A549 (cell line): ENCODE measurements at regions of chrX and their contacts with region 1.

Region 1: DNA sequence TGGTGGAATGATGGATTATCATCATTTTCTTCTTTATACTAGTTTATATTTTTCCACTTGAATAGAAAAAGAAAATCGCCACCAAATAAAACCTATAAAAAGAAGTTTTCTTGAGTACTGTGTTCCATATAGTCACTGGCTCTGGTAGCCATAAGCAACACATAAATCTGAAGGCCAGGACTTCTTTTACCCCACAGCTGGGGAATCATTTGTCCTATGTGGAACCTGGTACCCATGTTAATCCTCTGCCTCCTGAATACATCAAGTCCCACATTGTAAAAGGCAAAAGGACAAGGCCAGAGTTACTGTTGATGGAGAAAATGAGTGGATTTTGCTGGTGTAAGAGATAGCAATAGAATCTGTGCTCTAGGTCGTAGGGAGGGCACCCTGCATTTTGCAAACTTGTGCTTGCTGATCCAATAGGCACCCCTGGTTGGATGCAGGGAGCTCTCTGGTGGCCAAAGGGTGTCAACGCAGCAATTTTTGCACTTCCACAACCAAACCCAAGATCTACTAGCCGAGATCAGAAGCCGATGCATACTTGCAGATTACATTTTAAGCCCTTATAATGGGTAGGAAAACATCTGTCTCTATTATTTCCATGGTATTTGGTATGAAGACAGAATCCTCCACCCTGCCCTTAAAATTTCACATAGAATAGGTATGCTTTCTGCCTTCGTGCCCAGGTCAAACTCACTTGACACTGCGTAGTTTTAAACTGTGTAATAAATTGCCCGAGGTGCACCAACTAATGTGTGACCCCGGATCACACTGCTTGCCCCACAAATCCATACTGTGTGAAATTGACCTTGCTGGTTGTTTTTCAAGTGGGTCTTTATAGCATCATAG is 146.2 kb upstream of the SCML1 start:
- DNase-seq: peak; percentile 28 to 73
- ATAC-seq: peak; percentile 92 to 97
- H3K4me3 ChIP-seq: no peak overlapping the region
- H3K27ac ChIP-seq: peak overlapping the region; percentile 60 to 78
- H3K4me1 ChIP-seq: peaks cover 55% of the 10 kb centered on the region
- CTCF ChIP-seq: peak; percentile 68
- EP300 ChIP-seq: no peak
- POLR2A ChIP-seq: no peak
- RAD21 ChIP-seq: peak; percentile 88 to 93

Region 2: DNA sequence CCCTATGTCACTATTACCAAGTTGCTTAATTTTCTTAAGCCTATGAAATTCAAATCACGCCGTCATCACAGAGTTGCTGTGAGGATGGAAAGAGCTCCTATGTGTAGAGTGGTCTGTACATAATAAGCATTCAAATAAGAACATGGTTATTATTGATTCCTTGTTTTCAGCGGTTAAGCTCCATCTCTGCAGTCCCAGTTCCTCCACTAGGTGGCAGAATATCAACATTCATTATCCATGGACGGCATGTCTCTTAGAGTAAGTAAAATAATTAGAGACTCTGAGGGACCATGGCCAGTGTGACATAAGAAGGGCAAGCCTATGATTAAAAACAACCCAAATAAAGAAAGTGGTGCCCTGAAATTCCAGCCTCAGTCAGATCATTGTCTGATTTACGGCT is 348.6 kb before region 1 on chrX:
- CTCF ChIA-PET with region 1: interaction called, 14 read pairs
- POLR2A ChIA-PET with region 1: no interaction called
- DNase-seq: peak in 1 of 2 experiments; percentile 55
- ATAC-seq: peak; percentile 78 to 82; a peak in 5 of 6 replicates
- H3K4me3 ChIP-seq: no peak overlapping the region
- H3K27ac ChIP-seq: no peak overlapping the region
- H3K4me1 ChIP-seq: no peaks in the 10 kb centered on the region
- CTCF ChIP-seq: peak; percentile 72
- EP300 ChIP-seq: no peak
- POLR2A ChIP-seq: no peak
- RAD21 ChIP-seq: peak; percentile 79 to 82

Region 3: GRCh38 chrX:17377091-17377645 is 213.9 kb before region 1 on chrX:
- CTCF ChIA-PET with region 1: interaction called, 13 read pairs
- POLR2A ChIA-PET with region 1: interaction called, 9 read pairs
- DNase-seq: peak; percentile 64 to 86
- ATAC-seq: peak; percentile 46 to 76
- H3K4me3 ChIP-seq: peak overlapping the region; percentile 93
- H3K27ac ChIP-seq: peak overlapping the region; percentile 88 to 98
- H3K4me1 ChIP-seq: peaks cover 22% of the 10 kb centered on the region
- CTCF ChIP-seq: no peak
- EP300 ChIP-seq: no peak
- POLR2A ChIP-seq: no peak
- RAD21 ChIP-seq: peak in 1 of 2 experiments; percentile 2; a peak in 1 of 5 replicates

Region 4: GRCh38 chrX:17474892-17475291 is 116.2 kb before region 1 on chrX:
- CTCF ChIA-PET with region 1: no interaction called
- POLR2A ChIA-PET with region 1: no interaction called
- DNase-seq: peak in 1 of 2 experiments; percentile 7
- ATAC-seq: peak; percentile 30 to 67; a peak in 3 of 6 replicates
- H3K4me3 ChIP-seq: no peak overlapping the region
- H3K27ac ChIP-seq: peak overlapping the region in 1 of 2 experiments; percentile 65; a peak in 3 of 6 replicates
- H3K4me1 ChIP-seq: peaks cover 34% of the 10 kb centered on the region
- CTCF ChIP-seq: no peak
- EP300 ChIP-seq: no peak
- POLR2A ChIP-seq: no peak
- RAD21 ChIP-seq: no peak

Region 5: GRCh38 chrX:17535229-17535628 is 55.9 kb before region 1 on chrX:
- CTCF ChIA-PET with region 1: interaction called, 13 read pairs
- POLR2A ChIA-PET with region 1: no interaction called
- DNase-seq: peak in 1 of 2 experiments; percentile 46
- ATAC-seq: peak; percentile 39 to 78; a peak in 3 of 6 replicates
- H3K4me3 ChIP-seq: no peak overlapping the region
- H3K27ac ChIP-seq: no peak overlapping the region
- H3K4me1 ChIP-seq: no peaks in the 10 kb centered on the region
- CTCF ChIP-seq: peak; percentile 5; the same call in 1 of the 3 replicates
- EP300 ChIP-seq: no peak
- POLR2A ChIP-seq: no peak
- RAD21 ChIP-seq: peak; percentile 47 to 65; a peak in 4 of 5 replicates

Region 6: DNA sequence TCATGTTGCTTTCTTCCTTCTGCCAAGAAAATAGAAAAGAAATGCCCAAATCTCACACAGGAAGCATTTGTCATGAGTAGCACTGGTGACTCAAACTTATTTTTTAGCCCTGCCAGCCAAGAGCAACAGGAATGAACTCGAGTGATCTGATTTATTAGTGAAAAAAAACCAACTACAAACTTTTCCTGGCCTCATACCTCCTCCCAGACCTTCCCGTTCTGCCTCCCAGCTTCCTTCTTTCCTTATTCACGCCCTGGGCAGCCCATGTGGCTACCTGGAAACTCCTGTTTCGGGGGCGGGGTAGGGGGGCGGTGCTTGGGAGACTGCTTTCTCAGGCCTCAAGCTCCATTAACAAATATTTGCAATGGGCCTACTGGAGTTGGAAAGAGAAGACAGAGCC is 37.6 kb before region 1 on chrX:
- CTCF ChIA-PET with region 1: interaction called, 10 read pairs
- POLR2A ChIA-PET with region 1: no interaction called
- DNase-seq: peak in 1 of 2 experiments; percentile 14
- ATAC-seq: no peak; a peak in 1 of 6 replicates
- H3K4me3 ChIP-seq: no peak overlapping the region
- H3K27ac ChIP-seq: peak overlapping the region; percentile 50 to 78; a peak in 5 of 6 replicates
- H3K4me1 ChIP-seq: peaks cover 28% of the 10 kb centered on the region
- CTCF ChIP-seq: no peak
- EP300 ChIP-seq: no peak
- POLR2A ChIP-seq: no peak
- RAD21 ChIP-seq: no peak

Region 7: DNA sequence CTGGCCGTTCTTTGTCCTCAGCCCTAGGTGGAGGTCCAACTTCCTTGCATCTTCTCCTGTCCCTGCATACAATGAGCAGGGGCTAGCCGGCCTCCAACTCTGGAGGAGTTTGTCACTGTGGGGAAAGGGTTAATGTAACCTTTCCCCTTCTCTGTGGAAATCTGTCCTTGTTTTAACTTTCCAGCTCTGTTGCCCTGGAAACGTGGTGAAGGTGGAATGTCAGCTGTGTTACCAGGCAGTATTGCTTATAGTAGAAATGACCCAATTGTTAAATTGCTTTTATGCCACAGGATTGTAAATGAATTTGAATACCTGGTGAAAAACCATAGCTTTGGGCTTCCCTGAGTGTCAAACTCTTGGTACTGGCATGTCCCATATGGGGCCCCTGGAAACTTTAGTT is 14.6 kb after region 1 on chrX:
- CTCF ChIA-PET with region 1: interaction called, 16 read pairs
- POLR2A ChIA-PET with region 1: no interaction called
- DNase-seq: no peak
- ATAC-seq: no peak
- H3K4me3 ChIP-seq: no peak overlapping the region
- H3K27ac ChIP-seq: no peak overlapping the region
- H3K4me1 ChIP-seq: peaks cover 16% of the 10 kb centered on the region
- CTCF ChIP-seq: no peak
- EP300 ChIP-seq: no peak
- POLR2A ChIP-seq: no peak
- RAD21 ChIP-seq: no peak

Region 8: DNA sequence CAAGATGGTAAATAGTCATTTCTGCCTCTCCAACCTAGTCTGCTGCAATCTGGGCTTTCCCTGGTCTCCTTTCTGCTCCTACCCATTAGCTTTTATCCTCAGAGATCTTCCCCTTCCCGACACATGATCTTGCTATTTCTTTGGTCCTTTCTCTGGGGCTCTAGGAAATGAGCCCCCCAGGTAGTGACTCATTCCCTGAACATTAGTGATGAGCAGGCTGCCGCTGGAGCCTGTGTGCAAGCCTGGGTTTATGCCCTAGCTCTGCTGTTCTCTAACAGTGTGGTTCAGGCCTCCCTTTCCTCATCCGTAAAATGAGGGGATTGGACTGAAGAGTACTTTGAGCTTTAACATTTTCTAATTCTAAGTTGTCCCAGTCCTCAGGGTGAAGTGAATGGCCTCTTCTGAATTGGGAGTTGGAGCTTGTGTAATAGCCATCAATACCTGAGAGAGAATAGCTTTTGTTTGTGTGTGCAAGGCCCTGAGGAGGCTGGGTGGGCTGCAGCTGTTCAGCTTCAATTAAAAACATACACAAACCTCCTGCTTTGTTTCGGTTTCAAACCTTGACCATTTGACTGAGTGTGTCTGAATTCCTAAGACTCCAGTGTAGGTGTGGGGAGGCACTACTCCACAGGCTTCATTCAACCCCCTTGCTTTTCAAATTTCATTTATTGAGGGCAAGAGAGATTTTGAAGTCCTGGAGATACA is 30.6 kb after region 1 on chrX:
- CTCF ChIA-PET with region 1: no interaction called
- POLR2A ChIA-PET with region 1: no interaction called
- DNase-seq: no peak
- ATAC-seq: no peak
- H3K4me3 ChIP-seq: no peak overlapping the region
- H3K27ac ChIP-seq: no peak overlapping the region
- H3K4me1 ChIP-seq: no peaks in the 10 kb centered on the region
- CTCF ChIP-seq: no peak
- EP300 ChIP-seq: no peak
- POLR2A ChIP-seq: no peak
- RAD21 ChIP-seq: no peak